ENCODE measurements at regions of chr16 and their contacts with region 1.

Region 1: GRCh38 chr16:55668340-55669281 is 12.8 kb downstream of the SLC6A2 start:
- DNase-seq: peak; percentile 94
- H3K4me3 ChIP-seq: no peak overlapping the region
- H3K27ac ChIP-seq: peak overlapping the region; percentile 63
- H3K4me1 ChIP-seq: peaks cover 30% of the 10 kb centered on the region
- H3K27me3 ChIP-seq: no peaks in the 10 kb centered on the region
- CTCF ChIP-seq: no peak

Region 2: DNA sequence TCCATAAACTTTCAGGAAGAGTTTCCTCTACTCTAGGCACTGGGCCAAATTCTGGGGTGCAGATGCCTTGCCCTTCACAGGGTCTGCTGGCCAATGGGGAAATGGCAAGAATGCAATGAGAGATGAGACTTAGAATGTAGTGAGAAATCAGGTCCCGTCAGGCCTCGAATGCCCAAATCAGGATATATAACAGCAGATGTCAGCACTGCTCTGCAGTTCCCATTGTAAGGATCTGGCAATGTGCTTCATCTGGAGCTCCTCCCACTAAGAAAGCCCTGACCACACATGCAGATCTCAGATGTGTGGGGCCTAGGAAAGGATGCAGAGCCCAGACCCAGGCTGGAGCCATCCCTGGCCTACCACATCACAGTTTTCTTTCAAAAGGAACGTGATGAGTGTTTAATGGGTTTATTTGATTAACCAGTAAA is 173.6 kb before region 1 on chr16:
- CTCF ChIA-PET with region 1: no interaction called
- dilution Hi-C with region 1: no loop called
- in situ Hi-C with region 1: no loop called
- intact Hi-C with region 1: loop called (anchors 1 kb)
- DNase-seq: peak; percentile 70
- H3K4me3 ChIP-seq: no peak overlapping the region
- H3K27ac ChIP-seq: no peak overlapping the region
- H3K4me1 ChIP-seq: peaks cover 32% of the 10 kb centered on the region
- H3K27me3 ChIP-seq: no peaks in the 10 kb centered on the region
- CTCF ChIP-seq: peak; percentile 53 to 71

Region 3: GRCh38 chr16:55508941-55509931 is 159.4 kb before region 1 on chr16 and contains the start of gene LPCAT2:
- CTCF ChIA-PET with region 1: no interaction called
- dilution Hi-C with region 1: no loop called
- in situ Hi-C with region 1: no loop called
- intact Hi-C with region 1: no loop called
- DNase-seq: peak; percentile 84
- H3K4me3 ChIP-seq: peak within 1 kb of the TSS; percentile 54 to 87 (median 85)
- H3K27ac ChIP-seq: peak within 1 kb of the TSS; percentile 23
- H3K4me1 ChIP-seq: no peaks in the 10 kb centered on the region
- H3K27me3 ChIP-seq: no peaks in the 10 kb centered on the region
- CTCF ChIP-seq: peak in 1 of 2 donors; percentile 4
- total RNA-seq, gene LPCAT2: 50.5 to 173 TPM

Region 4: DNA sequence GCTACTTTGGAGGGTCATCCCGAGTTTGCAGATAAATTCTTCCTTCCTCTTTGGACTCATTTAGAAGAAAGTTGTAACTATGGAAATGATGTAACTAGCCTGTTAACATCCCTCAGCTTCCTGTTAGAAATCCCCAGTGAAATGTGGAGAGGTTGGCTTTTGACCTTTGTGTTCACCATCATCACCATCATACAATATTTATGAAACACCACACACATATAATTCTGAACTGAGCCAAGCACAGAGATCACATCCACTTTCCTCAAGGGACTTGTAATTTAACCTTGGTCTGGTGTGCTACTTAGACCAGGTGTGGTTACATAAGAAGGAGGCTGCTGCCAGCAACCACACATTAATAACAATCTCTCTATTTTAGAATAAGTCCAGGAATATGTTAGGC is 99.6 kb before region 1 on chr16:
- CTCF ChIA-PET with region 1: no interaction called
- dilution Hi-C with region 1: loop called (anchors 10 kb)
- in situ Hi-C with region 1: no loop called
- intact Hi-C with region 1: loop called (anchors 2 kb)
- DNase-seq: peak; percentile 57
- H3K4me3 ChIP-seq: no peak overlapping the region
- H3K27ac ChIP-seq: peak overlapping the region; percentile 96
- H3K4me1 ChIP-seq: peaks cover 40% of the 10 kb centered on the region
- H3K27me3 ChIP-seq: no peaks in the 10 kb centered on the region
- CTCF ChIP-seq: no peak

Region 5: GRCh38 chr16:55622930-55623561 is 45.6 kb before region 1 on chr16:
- CTCF ChIA-PET with region 1: no interaction called
- dilution Hi-C with region 1: no loop called
- in situ Hi-C with region 1: no loop called
- intact Hi-C with region 1: no loop called
- DNase-seq: peak; percentile 20
- H3K4me3 ChIP-seq: no peak overlapping the region
- H3K27ac ChIP-seq: no peak overlapping the region
- H3K4me1 ChIP-seq: no peaks in the 10 kb centered on the region
- H3K27me3 ChIP-seq: no peaks in the 10 kb centered on the region
- CTCF ChIP-seq: peak; percentile 52 to 63

Region 6: DNA sequence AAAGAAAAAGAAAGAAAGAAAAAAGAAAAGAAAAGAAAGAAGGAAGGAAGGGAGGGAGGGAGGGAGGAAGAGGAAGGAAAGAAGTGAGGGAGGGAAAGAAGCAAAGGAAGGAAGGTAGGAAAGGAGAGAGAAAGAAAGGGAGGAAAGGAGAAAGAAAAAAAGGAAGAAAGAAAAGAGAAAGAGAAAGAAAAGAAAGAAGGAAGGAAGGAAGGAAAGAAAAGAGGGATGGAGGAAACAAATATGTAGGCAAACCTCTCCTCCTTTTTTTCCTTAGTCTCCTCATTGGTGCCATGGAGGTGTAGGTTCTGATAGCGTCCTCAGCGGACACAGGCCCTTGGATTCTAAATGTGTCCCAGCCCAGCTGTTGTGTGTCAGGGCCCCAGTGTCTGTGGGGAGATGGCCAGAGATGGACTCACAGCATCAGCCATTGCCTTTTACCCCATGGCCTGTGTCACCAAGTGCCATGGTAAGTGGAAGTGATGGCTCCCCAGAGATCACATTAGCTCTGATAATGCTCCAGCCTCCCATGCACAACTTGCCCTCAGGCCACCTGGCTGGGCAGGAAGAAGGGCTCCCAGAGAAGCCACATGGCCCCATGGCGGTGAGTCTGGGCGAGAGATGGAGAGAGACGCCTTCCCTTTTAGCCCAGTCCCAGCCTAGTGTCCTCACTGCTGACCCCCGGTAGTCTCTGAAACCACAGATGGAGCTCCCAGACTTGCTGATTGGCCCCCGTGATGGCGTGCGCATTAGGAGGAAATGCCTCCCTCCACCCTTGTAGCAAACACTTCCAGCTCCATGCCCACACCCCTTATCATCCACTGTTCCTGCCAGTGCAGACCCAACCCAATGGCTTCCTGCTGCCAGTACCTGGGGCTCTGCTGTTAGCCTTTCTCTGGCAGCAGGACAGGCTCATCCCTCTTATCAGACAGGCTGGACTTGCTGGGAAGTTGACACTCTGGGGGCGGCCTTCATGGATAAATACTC is 16.5 kb before region 1 on chr16:
- CTCF ChIA-PET with region 1: no interaction called
- dilution Hi-C with region 1: no loop called
- in situ Hi-C with region 1: no loop called
- intact Hi-C with region 1: loop called (anchors 2 kb)
- DNase-seq: no peak
- H3K4me3 ChIP-seq: no peak overlapping the region
- H3K27ac ChIP-seq: no peak overlapping the region
- H3K4me1 ChIP-seq: peaks cover 9% of the 10 kb centered on the region
- H3K27me3 ChIP-seq: peaks cover 24% of the 10 kb centered on the region
- CTCF ChIP-seq: no peak

Region 7: DNA sequence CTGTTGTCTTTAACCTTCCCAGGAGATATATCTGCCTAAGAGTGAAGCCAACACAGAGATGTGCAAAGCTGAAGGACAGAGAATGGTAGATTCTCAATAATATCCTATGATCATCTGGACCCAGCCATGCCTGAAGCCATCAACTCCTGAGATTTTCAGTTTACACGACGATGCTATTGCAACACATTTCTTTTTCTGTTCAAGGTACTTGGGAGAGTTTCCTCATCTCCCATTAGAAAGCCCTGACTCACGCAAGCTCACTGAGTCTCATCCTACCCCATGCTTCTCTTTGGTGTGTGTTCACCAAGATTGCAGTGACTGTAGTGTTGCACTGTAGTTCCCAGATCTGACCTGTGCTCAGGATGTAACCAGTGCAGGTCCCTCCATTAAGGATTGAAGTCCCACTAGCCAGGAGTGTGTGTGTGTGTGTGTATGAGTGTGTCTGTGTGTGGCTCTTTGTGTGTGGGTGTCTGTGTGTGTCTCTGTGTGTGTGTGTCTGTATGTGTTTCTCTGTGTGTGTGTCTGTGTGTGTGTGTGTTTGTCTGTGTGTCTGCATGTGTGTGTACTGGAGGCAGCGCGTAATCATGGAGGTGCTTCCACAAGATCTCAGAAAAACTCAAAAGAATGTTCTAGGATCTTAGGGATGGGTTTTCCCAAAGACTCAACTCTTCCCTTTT is 148.8 kb after region 1 on chr16:
- CTCF ChIA-PET with region 1: no interaction called
- dilution Hi-C with region 1: no loop called
- in situ Hi-C with region 1: no loop called
- intact Hi-C with region 1: no loop called
- DNase-seq: peak; percentile 35
- H3K4me3 ChIP-seq: no peak overlapping the region
- H3K27ac ChIP-seq: no peak overlapping the region
- H3K4me1 ChIP-seq: no peaks in the 10 kb centered on the region
- H3K27me3 ChIP-seq: no peaks in the 10 kb centered on the region
- CTCF ChIP-seq: no peak

Measured in mammary epithelial cell (primary cell).